ENCODE measurements at regions of chr18 and their contacts with region 1.

Region 1: GRCh38 chr18:12049978-12050811 is 43.4 kb upstream of the ANKRD62 start:
- DNase-seq: peak in 1 of 5 donors; percentile 11
- H3K4me3 ChIP-seq: no peak overlapping the region
- H3K27ac ChIP-seq: no peak overlapping the region
- H3K4me1 ChIP-seq: no peaks in the 10 kb centered on the region
- H3K27me3 ChIP-seq: no peaks in the 10 kb centered on the region
- CTCF ChIP-seq: no peak
- EP300 ChIP-seq: no peak
- POLR2A ChIP-seq: no peak

Region 2: DNA sequence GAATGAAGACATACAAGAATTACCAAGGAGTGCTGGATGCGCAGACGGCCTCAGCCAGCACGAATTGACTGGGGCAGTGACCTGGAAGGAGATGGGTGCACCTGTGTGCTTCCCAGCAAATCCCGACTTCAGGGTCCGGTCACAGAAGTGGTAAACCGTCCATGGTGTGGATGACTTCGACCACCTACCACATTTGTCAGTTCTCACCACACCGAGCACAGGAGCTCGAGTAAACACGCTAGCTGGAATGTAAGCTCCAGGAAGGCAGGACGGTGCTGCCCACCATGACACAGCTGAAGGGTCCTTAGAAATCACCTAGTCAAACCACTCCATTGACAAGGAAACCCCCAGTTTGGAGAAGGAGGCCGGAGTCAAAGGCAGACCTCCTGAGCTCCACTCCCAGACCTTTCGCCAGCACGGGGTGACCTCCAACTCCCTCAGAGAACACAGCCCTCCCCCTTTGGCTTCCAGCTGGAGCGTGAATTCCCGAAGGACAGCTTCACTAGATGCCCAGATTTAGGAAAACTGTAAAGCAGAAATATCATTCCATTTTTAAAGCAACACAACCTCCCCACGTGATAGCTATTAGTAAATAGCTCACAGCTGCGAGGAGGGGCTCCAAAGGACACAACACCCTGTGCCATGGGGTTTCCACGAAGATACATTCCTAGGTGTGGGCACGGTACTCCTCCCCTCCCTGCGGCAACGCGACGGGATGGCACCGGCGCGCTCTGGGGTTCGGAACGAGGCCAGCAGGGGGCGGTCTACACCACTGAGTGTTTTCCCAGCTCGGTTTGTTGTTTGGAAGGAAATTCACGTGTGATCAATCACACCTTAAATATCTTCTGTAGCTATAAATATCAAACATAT is 395.2 kb before region 1 on chr18:
- intact Hi-C with region 1: loop called in 1 of 4 experiments (anchors 10 kb)
- DNase-seq: peak in 4 of 5 donors; percentile 32 to 59 (median 44)
- H3K4me3 ChIP-seq: no peak overlapping the region
- H3K27ac ChIP-seq: no peak overlapping the region
- H3K4me1 ChIP-seq: no peaks in the 10 kb centered on the region
- H3K27me3 ChIP-seq: no peaks in the 10 kb centered on the region
- CTCF ChIP-seq: peak; percentile 13 to 34 (median 28)
- EP300 ChIP-seq: no peak
- POLR2A ChIP-seq: no peak

Region 3: DNA sequence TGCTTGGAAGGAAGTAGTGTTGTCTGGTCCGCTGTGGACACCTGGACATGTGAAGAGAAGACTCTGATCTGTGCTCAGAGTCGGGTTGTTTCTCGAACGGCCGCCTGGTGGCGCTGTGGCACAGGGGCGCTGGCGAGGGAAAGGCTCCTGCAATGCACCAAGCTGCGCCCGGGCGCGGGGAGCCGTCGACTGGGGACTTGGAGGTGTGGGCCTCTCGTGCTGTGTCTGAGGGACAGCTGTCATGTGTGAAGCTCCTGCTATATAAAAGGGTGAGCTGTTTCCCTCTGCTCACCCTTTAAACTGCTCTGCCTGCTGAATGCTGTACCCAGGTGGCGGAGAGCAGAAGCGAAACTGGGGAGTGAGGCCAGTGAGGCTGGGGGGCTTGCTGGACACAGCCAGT is 317.2 kb before region 1 on chr18:
- intact Hi-C with region 1: loop called in 1 of 4 experiments (anchors 10 kb)
- DNase-seq: peak; percentile 48 to 82 (median 72)
- H3K4me3 ChIP-seq: no peak overlapping the region
- H3K27ac ChIP-seq: no peak overlapping the region
- H3K4me1 ChIP-seq: no peaks in the 10 kb centered on the region
- H3K27me3 ChIP-seq: no peaks in the 10 kb centered on the region
- CTCF ChIP-seq: peak; percentile 43 to 66 (median 56)
- EP300 ChIP-seq: no peak
- POLR2A ChIP-seq: no peak

Region 4: DNA sequence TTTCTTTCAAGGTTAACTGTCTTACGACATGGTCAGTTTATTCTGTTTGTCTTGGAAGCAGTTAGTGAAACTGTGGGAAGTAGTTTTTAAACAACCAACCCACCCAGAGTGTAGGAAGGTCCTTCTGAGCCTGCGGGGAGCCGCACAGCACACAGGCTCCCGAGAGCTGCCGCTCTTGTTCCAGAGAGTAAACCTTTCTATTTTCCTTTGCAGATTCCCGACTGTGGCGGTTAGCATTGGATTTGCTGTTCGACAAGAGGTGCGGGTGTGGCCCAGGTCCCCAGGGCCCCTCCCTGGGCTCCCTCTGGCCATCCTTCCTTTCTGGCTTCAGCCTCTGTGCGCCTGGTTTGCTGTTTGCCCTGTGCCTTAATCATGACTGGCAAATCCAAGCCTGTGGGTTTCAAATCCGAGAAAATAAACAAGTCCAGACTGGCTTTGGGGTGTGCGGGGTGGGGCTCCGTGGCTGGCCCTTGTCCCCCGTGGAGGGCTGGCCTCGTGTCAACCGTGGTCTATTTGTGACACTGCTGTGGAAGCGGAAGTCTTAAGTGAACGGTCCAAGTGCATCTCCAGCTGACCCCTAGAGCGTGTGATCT is 38.1 kb before region 1 on chr18:
- intact Hi-C with region 1: loop called in 1 of 4 experiments (anchors 5 kb)
- DNase-seq: peak in 1 of 5 donors; percentile 50
- H3K4me3 ChIP-seq: no peak overlapping the region
- H3K27ac ChIP-seq: peak overlapping the region in 1 of 2 donors; percentile 67
- H3K4me1 ChIP-seq: peaks cover 6% of the 10 kb centered on the region
- H3K27me3 ChIP-seq: no peaks in the 10 kb centered on the region
- CTCF ChIP-seq: no peak
- EP300 ChIP-seq: no peak
- POLR2A ChIP-seq: no peak

Region 5: DNA sequence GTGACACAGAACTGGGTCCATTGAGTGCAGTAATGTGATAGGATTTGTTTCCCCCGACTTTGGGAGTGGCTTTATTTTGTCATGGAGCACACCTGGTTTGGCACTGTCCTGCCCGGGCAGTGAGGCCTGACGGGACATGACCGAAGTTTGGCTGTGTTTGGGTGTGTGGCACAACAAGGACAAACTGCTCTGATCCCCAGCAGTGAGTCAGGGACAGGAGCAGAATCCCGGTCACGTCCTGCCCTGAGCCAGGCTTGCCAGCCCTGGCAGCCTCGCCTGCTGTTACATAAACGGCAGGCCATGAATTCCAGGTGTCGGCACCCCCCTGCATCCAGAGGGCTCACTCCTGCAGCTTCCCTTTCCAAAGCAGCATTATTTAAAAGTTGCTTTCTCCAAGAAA is 23.1 kb before region 1 on chr18:
- intact Hi-C with region 1: no loop called
- DNase-seq: no peak
- H3K4me3 ChIP-seq: no peak overlapping the region
- H3K27ac ChIP-seq: no peak overlapping the region
- H3K4me1 ChIP-seq: peaks cover 2% of the 10 kb centered on the region
- H3K27me3 ChIP-seq: no peaks in the 10 kb centered on the region
- CTCF ChIP-seq: no peak
- EP300 ChIP-seq: no peak
- POLR2A ChIP-seq: no peak